Natural killer cell (primary cell): ENCODE measurements at regions of chrX and their contacts with region 1.

Region 1: GRCh38 chrX:46461653-46462191 is 83.5 kb downstream of the ZNF674 start:
- DNase-seq: no peak
- ATAC-seq: peak in 2 of 3 donors; percentile 54 to 64
- H3K4me3 ChIP-seq: no peak overlapping the region
- H3K4me3 Mint-ChIP-seq: peak overlapping the region; percentile 63
- H3K27ac ChIP-seq: peak overlapping the region; percentile 57
- H3K27ac Mint-ChIP-seq: peak overlapping the region; percentile 79 to 86
- H3K4me1 ChIP-seq: peaks cover 32% of the 10 kb centered on the region
- H3K4me1 Mint-ChIP-seq: peaks cover 14 to 20% of the 10 kb centered on the region in 2 donors
- H3K27me3 ChIP-seq: no peaks in the 10 kb centered on the region
- H3K27me3 Mint-ChIP-seq: no peaks in the 10 kb centered on the region
- CTCF ChIP-seq: no peak

Region 2: GRCh38 chrX:46433892-46434291 is 27.8 kb before region 1 on chrX:
- intact Hi-C with region 1: no loop called
- DNase-seq: no peak
- ATAC-seq: no peak
- H3K4me3 ChIP-seq: no peak overlapping the region
- H3K4me3 Mint-ChIP-seq: no peak overlapping the region
- H3K27ac ChIP-seq: no peak overlapping the region
- H3K27ac Mint-ChIP-seq: no peak overlapping the region
- H3K4me1 ChIP-seq: no peaks in the 10 kb centered on the region
- H3K4me1 Mint-ChIP-seq: no peaks in the 10 kb centered on the region
- H3K27me3 ChIP-seq: no peaks in the 10 kb centered on the region
- H3K27me3 Mint-ChIP-seq: peaks cover 0 to 35% of the 10 kb centered on the region in 2 donors
- CTCF ChIP-seq: no peak

Region 3: DNA sequence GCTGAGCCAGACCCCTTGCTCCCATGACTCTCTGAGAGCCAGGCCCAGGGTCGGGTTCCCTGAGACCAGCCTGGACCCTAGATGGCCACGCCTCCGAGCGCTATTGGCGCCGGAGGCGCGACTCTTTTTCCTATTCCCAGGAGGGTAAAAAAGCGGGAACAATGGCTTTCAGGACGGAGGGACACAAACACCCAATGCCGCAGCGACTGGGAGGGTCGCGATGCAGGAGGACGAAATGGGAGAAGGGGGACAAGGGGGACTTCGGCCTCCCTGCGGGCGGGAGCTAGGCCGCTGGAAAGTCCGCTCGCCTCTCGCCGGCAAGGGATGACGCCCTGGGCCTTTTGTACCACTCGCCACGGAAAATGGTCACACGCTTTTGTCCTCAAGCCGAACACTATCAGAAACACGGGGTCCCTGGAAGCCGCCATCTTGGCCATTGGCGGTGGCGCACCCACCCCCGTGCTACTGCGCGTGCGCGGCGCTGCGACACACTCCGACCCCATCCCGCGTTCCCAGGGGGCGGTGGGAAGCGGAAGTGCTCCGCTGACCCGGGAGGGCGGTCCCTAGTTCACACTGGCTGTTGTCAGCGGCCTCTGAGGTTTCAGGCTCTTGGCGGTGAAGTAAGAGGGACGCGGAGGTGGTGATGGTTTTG is 14.9 kb before region 1 on chrX:
- intact Hi-C with region 1: loop called (anchors 1 kb)
- DNase-seq: peak; percentile 80 to 91
- ATAC-seq: peak; percentile 84 to 93 (median 92)
- H3K4me3 ChIP-seq: peak overlapping the region; percentile 69
- H3K4me3 Mint-ChIP-seq: peak overlapping the region; percentile 80
- H3K27ac ChIP-seq: peak overlapping the region; percentile 95
- H3K27ac Mint-ChIP-seq: peak overlapping the region; percentile 87 to 91
- H3K4me1 ChIP-seq: peaks cover 18% of the 10 kb centered on the region
- H3K4me1 Mint-ChIP-seq: peaks cover 0 to 5% of the 10 kb centered on the region in 2 donors
- H3K27me3 ChIP-seq: no peaks in the 10 kb centered on the region
- H3K27me3 Mint-ChIP-seq: no peaks in the 10 kb centered on the region
- CTCF ChIP-seq: no peak